SK-N-SH (cell line): ENCODE measurements at regions of chr1 and their contacts with region 1.

Region 1: DNA sequence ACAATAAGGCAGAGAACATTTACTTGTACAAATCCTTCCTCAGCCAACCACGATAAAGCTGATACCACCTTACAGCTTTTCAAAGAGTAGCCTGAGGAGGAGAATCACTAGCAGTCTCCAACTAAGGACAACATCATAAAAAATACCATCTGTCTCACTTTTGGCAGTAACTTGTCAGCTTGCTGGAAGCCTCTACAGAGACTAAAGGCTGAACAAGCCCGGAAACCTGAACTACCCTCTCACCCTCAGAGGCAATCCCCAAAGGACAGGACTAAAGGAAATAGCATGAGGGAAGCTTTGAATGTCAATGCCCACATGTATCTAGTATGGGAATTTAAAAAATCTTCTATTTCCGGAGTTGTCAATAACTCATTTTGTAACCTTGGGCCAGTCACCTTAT is 10.6 kb downstream of the SRSF4 start:
- DNase-seq: no peak
- H3K4me3 ChIP-seq: no peak overlapping the region
- H3K27ac ChIP-seq: no peak overlapping the region
- H3K4me1 ChIP-seq: peaks cover 3 to 19% of the 10 kb centered on the region in 2 experiments; a peak in 3 of 4 replicates
- H3K27me3 ChIP-seq: no peaks in the 10 kb centered on the region
- CTCF ChIP-seq: no peak
- EP300 ChIP-seq: no peak
- RAD21 ChIP-seq: no peak

Region 2: DNA sequence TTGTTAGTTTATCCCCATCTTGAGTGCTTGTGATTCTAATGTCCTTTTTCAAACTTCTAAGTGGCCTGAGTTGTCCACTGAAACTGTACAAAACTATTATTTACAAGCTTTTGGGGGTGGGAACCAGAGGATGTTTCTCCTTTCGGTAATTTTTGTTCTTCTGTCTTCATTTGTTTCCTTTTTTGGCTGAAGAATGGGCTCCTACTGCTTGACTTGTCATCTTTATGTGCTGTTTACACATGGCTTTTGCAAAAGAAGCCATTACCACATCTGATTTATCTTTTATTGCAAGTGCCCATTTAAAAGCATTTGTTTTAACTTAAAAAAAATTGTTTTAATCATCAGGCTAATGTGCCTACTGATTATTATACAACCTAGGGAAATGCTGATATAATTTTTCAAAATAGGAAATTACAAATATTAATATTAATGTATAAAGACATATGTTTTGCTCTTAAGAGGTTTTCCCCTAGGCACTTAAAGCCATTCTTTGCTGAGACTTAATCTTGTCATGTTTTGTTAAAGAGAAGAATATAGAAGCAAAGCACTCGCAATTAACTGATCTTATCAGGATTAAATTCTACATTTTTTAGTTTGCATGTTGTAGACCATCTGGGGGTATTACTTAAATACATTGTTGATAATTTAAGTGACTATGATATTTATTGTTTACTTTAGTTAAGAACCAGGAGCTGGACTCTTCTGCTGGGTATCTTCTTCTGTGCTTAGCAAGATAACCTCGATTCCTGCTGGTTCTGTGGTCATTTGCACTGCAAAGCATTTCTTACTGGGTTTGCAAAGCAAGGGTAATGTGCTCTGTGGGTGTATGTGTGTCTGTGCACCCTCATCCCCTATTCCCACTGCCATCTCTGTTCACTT is 87.5 kb before region 1 on chr1:
- CTCF ChIA-PET with region 1: no interaction called
- POLR2A ChIA-PET with region 1: no interaction called
- DNase-seq: peak; percentile 50
- H3K4me3 ChIP-seq: no peak overlapping the region
- H3K27ac ChIP-seq: peak overlapping the region; percentile 30 to 93; a peak in 3 of 4 replicates
- H3K4me1 ChIP-seq: peaks cover 2 to 16% of the 10 kb centered on the region in 2 experiments; a peak in 3 of 4 replicates
- H3K27me3 ChIP-seq: no peaks in the 10 kb centered on the region
- CTCF ChIP-seq: no peak
- EP300 ChIP-seq: peak in 1 of 2 experiments; percentile 65; a peak in 2 of 4 replicates
- RAD21 ChIP-seq: no peak

Region 3: DNA sequence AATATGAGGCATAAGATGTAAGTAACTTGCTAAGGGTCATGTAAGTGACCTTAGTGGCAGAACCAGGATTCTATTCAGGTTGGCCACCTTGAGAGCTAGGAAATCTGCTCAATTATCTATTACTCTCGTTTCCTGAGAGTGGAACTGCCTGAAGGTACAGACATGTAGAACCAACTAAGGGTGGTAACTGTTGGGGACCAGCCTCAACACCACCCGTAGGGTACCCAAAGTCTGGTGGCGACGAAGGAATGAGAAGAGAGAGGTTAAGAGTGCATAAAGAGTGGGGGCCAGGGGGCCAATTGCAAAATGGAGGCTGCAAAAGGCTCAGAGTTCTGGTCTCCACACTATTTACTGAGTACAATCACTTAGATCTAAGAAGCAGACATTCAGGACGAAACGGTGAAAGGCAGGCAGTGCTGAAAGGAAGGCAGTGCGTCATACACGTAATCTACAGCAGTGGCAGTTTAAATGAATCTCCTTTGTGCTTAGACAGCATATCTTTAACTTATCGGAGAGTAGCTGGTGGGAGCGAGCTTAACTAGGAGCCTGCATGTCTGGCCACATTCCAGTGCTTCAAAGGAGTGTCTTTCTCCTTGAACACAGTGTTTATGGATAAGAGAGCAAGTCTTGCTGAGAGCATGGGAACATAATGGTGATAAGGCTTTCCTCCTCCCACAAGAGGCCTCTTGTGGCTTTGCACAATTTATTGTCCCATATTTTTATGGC is 14.4 kb before region 1 on chr1:
- CTCF ChIA-PET with region 1: interaction called, 10 read pairs
- POLR2A ChIA-PET with region 1: no interaction called
- DNase-seq: no peak
- H3K4me3 ChIP-seq: no peak overlapping the region
- H3K27ac ChIP-seq: peak overlapping the region in 1 of 2 experiments; percentile 64; a peak in 2 of 4 replicates
- H3K4me1 ChIP-seq: peaks cover 8 to 10% of the 10 kb centered on the region in 2 experiments; a peak in 2 of 4 replicates
- H3K27me3 ChIP-seq: no peaks in the 10 kb centered on the region
- CTCF ChIP-seq: no peak
- EP300 ChIP-seq: no peak
- RAD21 ChIP-seq: no peak

Region 4: GRCh38 chr1:29607236-29607635 is 436.1 kb after region 1 on chr1:
- CTCF ChIA-PET with region 1: no interaction called
- POLR2A ChIA-PET with region 1: no interaction called
- DNase-seq: no peak
- H3K4me3 ChIP-seq: no peak overlapping the region
- H3K27ac ChIP-seq: no peak overlapping the region
- H3K4me1 ChIP-seq: no peaks in the 10 kb centered on the region
- H3K27me3 ChIP-seq: no peaks in the 10 kb centered on the region
- CTCF ChIP-seq: no peak
- EP300 ChIP-seq: no peak
- RAD21 ChIP-seq: no peak